MCF 10A (cell line): ENCODE measurements at regions of chr1 and their contacts with region 1.

Region 1: GRCh38 chr1:24415334-24415909 is at the start of gene NIPAL3:
- DNase-seq: peak; percentile 99
- H3K4me3 Mint-ChIP-seq: peak within 1 kb of the TSS; percentile 93
- H3K27ac Mint-ChIP-seq: peak within 1 kb of the TSS; percentile 98
- H3K4me1 Mint-ChIP-seq: peaks cover 45% of the 10 kb centered on the region
- H3K27me3 Mint-ChIP-seq: no peaks in the 10 kb centered on the region
- CTCF ChIP-seq: peak; percentile 84
- total RNA-seq, gene NIPAL3: 47.7 and 55.8 TPM in 2 replicates

Region 2: DNA sequence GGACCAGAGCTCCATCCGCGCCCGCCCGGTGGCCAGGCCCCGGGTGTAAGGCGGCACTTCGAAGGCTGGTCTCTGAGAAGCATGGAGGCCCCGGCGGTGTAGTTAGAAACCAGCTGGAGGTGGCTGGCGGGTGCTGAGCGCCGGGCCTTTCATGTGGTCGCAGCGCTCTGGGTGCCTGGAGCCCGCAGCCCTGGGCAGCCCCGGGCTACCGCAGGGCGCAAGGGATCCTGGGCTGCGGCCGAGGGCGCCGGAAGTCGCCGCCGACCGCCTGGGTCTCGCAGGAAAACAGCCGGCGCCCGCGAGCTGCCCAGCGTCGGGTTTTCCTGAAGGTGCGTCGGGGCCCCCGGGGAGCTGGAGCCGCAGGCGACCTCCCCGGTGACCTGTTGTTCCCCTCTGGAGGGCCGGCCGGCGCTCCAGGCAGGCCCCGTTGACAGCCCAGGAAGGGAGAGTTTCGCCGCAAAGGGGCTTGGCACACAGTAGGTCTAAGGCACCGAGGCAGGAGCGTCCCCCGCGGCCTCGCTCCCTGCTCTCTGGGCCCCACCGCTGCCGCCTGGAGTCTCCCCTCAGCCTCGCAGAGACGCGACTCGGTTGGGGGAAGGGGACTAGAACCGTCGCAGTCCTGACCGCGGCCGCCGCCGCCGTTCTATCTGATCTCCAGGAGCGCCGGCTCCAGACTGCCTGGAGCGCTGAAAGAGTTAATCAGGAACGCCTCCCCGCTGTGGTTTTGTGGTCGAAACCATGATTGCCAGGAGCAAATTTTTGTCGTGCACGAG is 93.5 kb before region 1 on chr1:
- CTCF ChIA-PET with region 1: no interaction called
- POLR2A ChIA-PET with region 1: interaction called, 19 read pairs
- intact Hi-C with region 1: no loop called
- DNase-seq: peak; percentile 95
- H3K4me3 Mint-ChIP-seq: peak overlapping the region; percentile 74
- H3K27ac Mint-ChIP-seq: peak overlapping the region; percentile 87
- H3K4me1 Mint-ChIP-seq: peaks cover 64% of the 10 kb centered on the region
- H3K27me3 Mint-ChIP-seq: no peaks in the 10 kb centered on the region
- CTCF ChIP-seq: no peak

Region 3: DNA sequence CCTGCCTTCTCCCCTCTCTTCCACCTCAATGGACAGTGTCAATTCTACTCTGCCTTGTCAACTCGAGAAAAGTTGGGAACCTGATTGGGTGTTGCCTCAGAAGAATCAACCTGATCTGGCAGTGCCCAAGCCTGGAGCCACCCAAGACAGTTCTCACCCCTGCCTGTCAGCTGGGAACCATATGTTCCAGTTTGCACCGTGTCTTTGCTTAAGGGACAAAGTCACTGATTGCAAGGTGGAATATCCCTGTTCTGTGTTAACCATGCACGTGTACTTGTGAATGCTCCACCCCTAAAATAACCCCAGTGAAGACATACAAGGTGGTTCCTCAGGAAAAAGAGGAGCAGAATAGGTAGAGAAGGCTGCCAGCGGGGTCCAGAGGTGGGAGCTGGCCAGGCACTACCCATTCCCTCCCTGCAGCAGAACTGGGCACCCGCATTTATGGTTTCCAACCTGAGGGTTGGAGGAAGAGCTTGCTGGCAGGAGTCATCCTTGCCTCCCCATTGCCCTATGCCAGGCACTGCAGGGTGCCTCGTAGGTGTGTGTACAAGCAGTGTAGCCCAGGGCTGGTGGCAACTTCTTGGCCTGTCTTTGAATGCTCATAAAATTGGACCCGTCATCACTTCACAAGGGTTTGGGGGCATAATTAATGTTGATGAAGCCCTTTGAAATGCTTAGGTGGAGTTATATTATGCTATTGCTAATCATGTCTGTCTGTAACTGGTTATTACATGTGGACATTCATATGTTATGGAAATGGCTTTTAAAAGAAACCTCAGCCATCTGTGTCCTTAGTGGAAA is 11.5 kb after region 1 on chr1:
- CTCF ChIA-PET with region 1: interaction called, 12 read pairs
- POLR2A ChIA-PET with region 1: interaction called, 6 read pairs
- intact Hi-C with region 1: no loop called
- DNase-seq: no peak
- H3K4me3 Mint-ChIP-seq: no peak overlapping the region
- H3K27ac Mint-ChIP-seq: no peak overlapping the region
- H3K4me1 Mint-ChIP-seq: no peaks in the 10 kb centered on the region
- H3K27me3 Mint-ChIP-seq: no peaks in the 10 kb centered on the region
- CTCF ChIP-seq: no peak

Region 4: GRCh38 chr1:24513706-24514105 is 98.3 kb after region 1 on chr1:
- CTCF ChIA-PET with region 1: interaction called, 3 read pairs
- POLR2A ChIA-PET with region 1: interaction called, 21 read pairs
- intact Hi-C with region 1: no loop called
- DNase-seq: no peak
- H3K4me3 Mint-ChIP-seq: no peak overlapping the region
- H3K27ac Mint-ChIP-seq: no peak overlapping the region
- H3K4me1 Mint-ChIP-seq: peaks cover 15% of the 10 kb centered on the region
- H3K27me3 Mint-ChIP-seq: no peaks in the 10 kb centered on the region
- CTCF ChIP-seq: no peak

Region 5: DNA sequence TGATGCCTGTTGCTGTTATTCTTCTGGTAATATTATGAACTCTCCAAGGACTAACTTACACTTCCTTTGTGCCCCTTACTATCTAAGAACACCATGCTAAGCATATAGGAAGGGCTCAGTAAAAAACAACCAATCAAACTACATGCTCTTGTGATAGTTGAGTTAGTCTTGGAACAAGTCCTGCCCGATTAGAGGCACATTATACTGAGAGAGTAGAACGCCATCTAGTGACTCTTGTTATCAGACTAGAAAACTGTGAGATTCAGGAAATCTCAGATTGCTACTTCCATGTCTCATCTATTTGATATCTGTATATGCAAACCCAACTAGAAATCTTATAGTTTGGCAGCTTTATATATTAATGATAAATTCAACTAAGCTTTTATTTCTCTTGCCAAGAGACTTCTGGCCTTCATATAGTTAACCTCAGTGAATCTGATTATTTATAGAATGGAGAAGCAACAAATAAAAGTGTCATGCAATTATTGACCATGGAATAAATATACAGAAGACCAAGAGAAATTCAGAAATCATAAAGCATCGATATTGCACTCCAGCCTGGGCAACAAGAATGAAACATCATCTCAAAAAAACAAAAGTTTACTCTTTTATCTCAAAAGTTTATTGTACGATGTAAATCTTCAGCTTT is 219.9 kb after region 1 on chr1:
- CTCF ChIA-PET with region 1: interaction called, 7 read pairs
- POLR2A ChIA-PET with region 1: interaction called, 6 read pairs
- intact Hi-C with region 1: loop called (anchors 5 kb)
- DNase-seq: peak; percentile 72
- H3K4me3 Mint-ChIP-seq: no peak overlapping the region
- H3K27ac Mint-ChIP-seq: no peak overlapping the region
- H3K4me1 Mint-ChIP-seq: peaks cover 12% of the 10 kb centered on the region
- H3K27me3 Mint-ChIP-seq: peaks cover 22% of the 10 kb centered on the region
- CTCF ChIP-seq: peak; percentile 44